Left lung (tissue), 14 donors: ENCODE measurements at regions of chr2 and their contacts with region 1.

Region 1: GRCh38 chr2:64488050-64488974 is 34.4 kb downstream of the LGALSL start:
- DNase-seq: peak in 3 of 4 donors; percentile 60 to 91 (median 68)
- ATAC-seq: peak; percentile 91
- H3K4me3 ChIP-seq: no peak overlapping the region
- H3K27ac ChIP-seq: no peak overlapping the region
- H3K4me1 ChIP-seq: peaks cover 0 to 20% of the 10 kb centered on the region in 2 donors
- H3K27me3 ChIP-seq: no peaks in the 10 kb centered on the region
- CTCF ChIP-seq: peak; percentile 98 to 99

Region 2: DNA sequence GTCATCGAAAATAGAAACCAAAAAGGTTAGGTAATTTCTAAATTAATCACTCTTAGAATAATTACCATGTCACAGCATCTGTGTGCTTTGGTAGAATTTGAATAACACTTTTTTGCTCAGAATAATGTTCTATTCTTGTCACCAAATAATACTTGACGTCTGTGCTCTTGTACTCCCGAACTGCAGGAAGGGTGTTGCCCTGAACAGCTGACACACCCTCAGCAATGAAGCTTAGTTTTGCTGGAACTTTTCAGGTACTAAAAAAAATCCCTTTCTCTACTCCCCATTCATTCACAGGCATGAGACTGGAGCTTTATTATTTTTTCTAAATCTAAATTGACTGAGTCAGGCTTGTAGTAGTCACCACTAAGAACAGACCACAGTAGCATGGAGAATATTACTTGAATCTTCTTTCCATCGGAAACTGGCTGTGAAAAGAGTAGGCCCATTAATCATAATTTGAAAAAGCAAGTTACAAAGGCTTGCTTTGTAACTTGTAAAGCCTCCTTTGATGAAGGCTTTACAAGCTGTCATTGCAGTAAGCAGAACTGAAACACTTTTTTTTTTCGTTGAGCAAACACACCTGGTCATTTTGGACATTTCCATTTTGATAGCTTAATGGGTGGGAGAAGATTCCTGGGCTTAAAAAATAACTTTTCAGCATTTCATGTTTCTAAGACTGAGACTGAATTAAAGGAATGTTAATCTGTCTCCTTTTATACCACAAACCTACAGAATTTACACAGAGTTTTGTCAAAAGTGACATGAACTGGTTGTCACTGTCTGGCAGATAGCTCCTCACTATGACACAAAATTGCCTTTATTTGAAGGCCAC is 273.8 kb before region 1 on chr2:
- intact Hi-C with region 1: no loop called
- DNase-seq: peak in 1 of 4 donors; percentile 46
- ATAC-seq: peak; percentile 69
- H3K4me3 ChIP-seq: no peak overlapping the region
- H3K27ac ChIP-seq: peak overlapping the region; percentile 78 to 90
- H3K4me1 ChIP-seq: peaks cover 20 to 55% of the 10 kb centered on the region in 2 donors
- H3K27me3 ChIP-seq: no peaks in the 10 kb centered on the region
- CTCF ChIP-seq: no peak

Region 3: GRCh38 chr2:64330281-64331113 is 157.8 kb before region 1 on chr2:
- intact Hi-C with region 1: loop called in 1 of 2 experiments (anchors 5 kb)
- DNase-seq: peak; percentile 78 to 93 (median 87)
- ATAC-seq: peak; percentile 82
- H3K4me3 ChIP-seq: no peak overlapping the region
- H3K27ac ChIP-seq: peak overlapping the region; percentile 21 to 79
- H3K4me1 ChIP-seq: peaks cover 10 to 46% of the 10 kb centered on the region in 2 donors
- H3K27me3 ChIP-seq: no peaks in the 10 kb centered on the region
- CTCF ChIP-seq: peak; percentile 87 to 90

Region 4: DNA sequence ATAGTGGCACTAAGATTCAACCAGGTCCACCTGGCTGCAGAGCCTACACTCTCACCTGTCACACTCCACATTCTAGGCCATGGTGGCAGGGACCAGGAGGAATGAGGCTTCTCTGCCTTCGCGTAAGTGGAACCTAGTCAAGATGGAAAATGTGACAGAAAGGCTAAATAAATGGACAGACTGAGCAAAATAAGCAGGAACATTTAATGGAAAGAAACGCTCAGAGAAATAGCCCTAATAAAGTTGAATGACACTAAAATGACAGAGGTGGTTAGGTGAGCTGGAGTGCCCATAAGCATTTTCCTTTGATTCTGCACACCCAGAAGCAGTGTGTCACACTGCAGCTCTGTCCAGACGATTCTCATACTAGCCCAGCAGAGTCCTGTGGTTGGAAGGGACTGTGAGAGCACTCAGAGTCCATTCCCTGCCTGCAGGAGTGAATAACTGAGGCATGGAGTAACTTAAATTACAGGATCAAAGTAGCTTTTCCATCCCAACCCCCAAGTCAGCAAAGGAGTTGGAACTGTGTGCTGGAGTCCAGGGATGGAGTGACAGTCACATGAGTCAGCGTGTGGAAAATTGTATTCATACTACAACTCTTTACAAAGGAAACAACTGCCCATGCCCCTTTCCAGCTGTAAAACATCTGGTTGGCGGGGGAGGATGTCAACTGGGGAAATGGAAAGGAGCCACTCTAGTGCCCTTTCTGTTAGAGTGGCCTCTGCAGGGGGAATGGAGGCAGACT is 139.8 kb before region 1 on chr2:
- intact Hi-C with region 1: loop called in 1 of 2 experiments (anchors 10 kb)
- DNase-seq: no peak
- ATAC-seq: no peak
- H3K4me3 ChIP-seq: no peak overlapping the region
- H3K27ac ChIP-seq: no peak overlapping the region
- H3K4me1 ChIP-seq: no peaks in the 10 kb centered on the region
- H3K27me3 ChIP-seq: no peaks in the 10 kb centered on the region
- CTCF ChIP-seq: no peak

Region 5: GRCh38 chr2:64362562-64363026 is 125.7 kb before region 1 on chr2:
- intact Hi-C with region 1: no loop called
- DNase-seq: peak in 1 of 4 donors; percentile 48
- ATAC-seq: peak; percentile 81
- H3K4me3 ChIP-seq: no peak overlapping the region
- H3K27ac ChIP-seq: no peak overlapping the region
- H3K4me1 ChIP-seq: peaks cover 7 to 9% of the 10 kb centered on the region in 2 donors
- H3K27me3 ChIP-seq: no peaks in the 10 kb centered on the region
- CTCF ChIP-seq: no peak

Region 6: GRCh38 chr2:64383016-64383591 is 105.2 kb before region 1 on chr2:
- intact Hi-C with region 1: no loop called
- DNase-seq: no peak
- ATAC-seq: peak; percentile 64
- H3K4me3 ChIP-seq: no peak overlapping the region
- H3K27ac ChIP-seq: peak overlapping the region in 1 of 2 donors; percentile 2
- H3K4me1 ChIP-seq: peaks cover 0 to 13% of the 10 kb centered on the region in 2 donors
- H3K27me3 ChIP-seq: no peaks in the 10 kb centered on the region
- CTCF ChIP-seq: no peak